Naive thymus-derived CD8-positive, alpha-beta T cell (primary cell): ENCODE measurements at regions of chr19 and their contacts with region 1.

Region 1: GRCh38 chr19:57708641-57709361 is at the start of gene ZNF154:
- DNase-seq: peak; percentile 38 to 89 (median 54)
- ATAC-seq: peak; percentile 91 to 95
- H3K4me3 Mint-ChIP-seq: peak within 1 kb of the TSS; percentile 77 to 96 (median 92)
- H3K27ac Mint-ChIP-seq: peak within 1 kb of the TSS; percentile 88 to 100 (median 95)
- H3K4me1 Mint-ChIP-seq: peaks cover 6 to 40% (median 15%) of the 10 kb centered on the region in 4 donors
- H3K27me3 Mint-ChIP-seq: peaks cover 0 to 16% (median 3%) of the 10 kb centered on the region in 5 donors
- polyA plus RNA-seq, gene ZNF154: 1.1 to 2.4 (median 1.2) TPM

Region 2: DNA sequence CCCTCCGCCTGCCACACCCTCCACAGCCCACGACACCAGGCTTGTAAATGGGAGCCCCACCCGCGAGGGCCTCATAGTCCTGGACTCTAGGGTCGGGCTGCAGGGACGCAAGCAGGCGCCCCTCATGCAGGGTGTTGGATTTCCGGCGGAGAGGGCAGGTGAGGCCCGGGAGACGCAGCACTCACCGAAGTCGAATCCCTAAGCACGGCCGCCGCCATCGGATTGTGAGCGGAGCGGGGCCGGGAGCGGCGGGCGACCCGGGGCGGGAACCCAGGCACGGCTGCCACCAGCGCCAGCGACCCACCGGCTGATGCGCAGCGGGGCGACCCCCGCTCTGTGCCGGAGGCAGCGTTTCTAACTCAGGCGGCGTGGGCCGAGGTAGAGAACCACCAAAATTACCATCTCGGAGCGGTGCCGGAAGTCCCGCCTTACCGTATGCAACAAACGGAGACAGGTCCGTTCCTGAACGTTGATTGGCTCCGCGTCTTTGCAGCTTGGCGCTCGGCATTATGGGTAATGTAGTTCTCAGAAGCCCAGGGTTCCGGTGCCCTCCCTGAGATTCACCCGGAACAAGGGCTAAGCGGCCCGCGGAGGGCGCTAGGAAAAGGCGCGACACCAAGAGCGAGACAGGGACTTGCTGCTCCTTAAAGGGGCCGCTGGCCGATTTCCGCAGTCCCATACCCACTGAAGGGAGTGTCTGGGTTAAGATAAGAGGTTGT is 130.2 kb before region 1 on chr19 and contains the start of gene ZNF416:
- POLR2A ChIA-PET with region 1: interaction called, 11 read pairs
- DNase-seq: peak; percentile 83 to 99 (median 96)
- ATAC-seq: peak; percentile 84 to 97
- H3K4me3 Mint-ChIP-seq: peak within 1 kb of the TSS; percentile 78 to 90 (median 82)
- H3K27ac Mint-ChIP-seq: peak within 1 kb of the TSS; percentile 83 to 96 (median 91)
- H3K4me1 Mint-ChIP-seq: peaks cover 13 to 31% (median 30%) of the 10 kb centered on the region in 4 donors
- H3K27me3 Mint-ChIP-seq: no peaks in the 10 kb centered on the region
- polyA plus RNA-seq, gene ZNF416: 4.1 to 7.6 (median 4.3) TPM

Region 3: GRCh38 chr19:57613941-57614743 is 94.7 kb before region 1 on chr19 and contains the start of gene ZNF134:
- POLR2A ChIA-PET with region 1: interaction called, 15 read pairs
- DNase-seq: peak; percentile 80 to 95 (median 88)
- ATAC-seq: peak; percentile 99 to 100
- H3K4me3 Mint-ChIP-seq: peak within 1 kb of the TSS; percentile 86 to 94 (median 92)
- H3K27ac Mint-ChIP-seq: peak within 1 kb of the TSS; percentile 67 to 94 (median 89)
- H3K4me1 Mint-ChIP-seq: peaks cover 28 to 41% (median 38%) of the 10 kb centered on the region in 4 donors
- H3K27me3 Mint-ChIP-seq: no peaks in the 10 kb centered on the region
- polyA plus RNA-seq, gene ZNF134: 9.6 to 15.1 (median 13.7) TPM

Region 4: GRCh38 chr19:57632987-57633831 is 75.6 kb before region 1 on chr19 and contains the start of gene ZNF211:
- POLR2A ChIA-PET with region 1: interaction called, 12 read pairs
- DNase-seq: peak; percentile 75 to 94 (median 85)
- ATAC-seq: peak; percentile 97 to 99
- H3K4me3 Mint-ChIP-seq: peak within 1 kb of the TSS; percentile 84 to 97 (median 94)
- H3K27ac Mint-ChIP-seq: peak within 1 kb of the TSS; percentile 78 to 96 (median 94)
- H3K4me1 Mint-ChIP-seq: peaks cover 14 to 29% (median 25%) of the 10 kb centered on the region in 4 donors
- H3K27me3 Mint-ChIP-seq: no peaks in the 10 kb centered on the region
- polyA plus RNA-seq, gene ZNF211: 13.5 to 18.5 (median 15.5) TPM

Region 5: DNA sequence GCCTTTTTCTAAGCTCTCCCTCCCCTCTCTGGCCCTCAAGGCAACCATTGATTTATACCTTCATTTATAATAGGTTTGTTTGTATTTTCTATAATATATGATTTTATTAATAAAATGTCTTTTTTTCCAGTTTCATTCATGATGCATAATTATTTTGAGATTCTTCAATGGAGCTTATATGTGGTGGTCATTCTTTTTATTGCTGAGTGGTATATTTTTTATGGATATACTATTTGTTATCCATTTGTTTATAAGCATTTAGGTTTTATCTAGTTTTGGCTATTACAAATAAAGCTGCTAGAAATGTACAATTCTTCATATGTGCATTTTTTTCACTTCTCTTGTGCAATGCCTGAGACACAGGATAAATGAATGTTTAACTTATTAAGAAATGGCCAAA is 65.1 kb before region 1 on chr19:
- POLR2A ChIA-PET with region 1: no interaction called
- DNase-seq: no peak
- ATAC-seq: no peak
- H3K4me3 Mint-ChIP-seq: no peak overlapping the region
- H3K27ac Mint-ChIP-seq: no peak overlapping the region
- H3K4me1 Mint-ChIP-seq: no peaks in the 10 kb centered on the region
- H3K27me3 Mint-ChIP-seq: no peaks in the 10 kb centered on the region

Region 6: DNA sequence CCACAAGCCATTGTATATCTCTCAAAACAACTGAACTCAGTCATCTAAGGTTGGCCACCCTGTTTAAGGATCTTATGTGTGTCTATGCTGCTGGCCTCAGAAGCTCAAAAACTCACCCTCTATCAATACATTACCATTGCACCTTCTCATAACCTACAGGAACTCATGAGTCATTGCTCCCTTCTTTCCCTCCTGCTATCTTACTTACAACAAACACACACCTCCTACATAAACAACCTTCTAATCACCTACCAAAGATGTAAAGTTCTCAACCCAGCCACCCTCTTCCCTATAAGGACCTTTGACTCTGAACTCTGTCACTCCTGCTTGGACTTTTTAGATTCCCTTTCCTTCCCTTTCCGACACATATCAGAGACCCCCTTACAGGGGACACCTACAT is 53.4 kb before region 1 on chr19:
- POLR2A ChIA-PET with region 1: no interaction called
- DNase-seq: no peak
- ATAC-seq: no peak
- H3K4me3 Mint-ChIP-seq: no peak overlapping the region
- H3K27ac Mint-ChIP-seq: no peak overlapping the region
- H3K4me1 Mint-ChIP-seq: peaks cover 0 to 8% (median 5%) of the 10 kb centered on the region in 4 donors
- H3K27me3 Mint-ChIP-seq: peaks cover 31 to 69% (median 45%) of the 10 kb centered on the region in 5 donors

Region 7: DNA sequence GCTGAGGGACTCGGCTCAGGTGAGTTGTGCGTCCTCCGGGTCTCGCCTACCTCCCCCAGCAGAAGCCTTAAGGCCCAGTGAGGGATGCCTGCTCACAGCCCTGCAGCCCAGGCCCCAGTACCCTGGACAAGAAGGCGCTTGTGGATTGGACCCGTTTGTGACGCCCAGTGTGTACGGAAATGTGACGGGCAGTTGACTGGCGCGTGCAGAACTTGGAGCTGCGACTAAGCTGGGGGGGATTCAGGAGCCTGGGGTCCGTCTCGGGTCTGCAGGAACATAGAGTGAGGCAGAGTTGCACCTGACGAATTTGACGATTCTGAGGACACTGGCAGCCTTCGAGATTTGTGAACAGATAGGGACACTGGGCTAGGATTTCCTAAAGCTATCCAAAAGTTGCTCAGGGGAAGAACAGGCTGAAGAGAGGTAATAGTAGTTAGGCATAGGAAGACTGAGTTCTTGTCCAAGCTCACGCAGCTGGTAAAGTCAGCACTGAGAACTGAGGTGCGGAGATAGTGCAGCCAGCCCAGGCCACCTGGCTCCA is 26.5 kb before region 1 on chr19:
- POLR2A ChIA-PET with region 1: interaction called, 29 read pairs
- DNase-seq: no peak
- ATAC-seq: no peak
- H3K4me3 Mint-ChIP-seq: peak overlapping the region; percentile 96 to 99 (median 98)
- H3K27ac Mint-ChIP-seq: peak overlapping the region; percentile 94 to 99 (median 98)
- H3K4me1 Mint-ChIP-seq: peaks cover 26 to 41% (median 38%) of the 10 kb centered on the region in 4 donors
- H3K27me3 Mint-ChIP-seq: peaks cover 3 to 14% (median 5%) of the 10 kb centered on the region in 5 donors

Region 8: DNA sequence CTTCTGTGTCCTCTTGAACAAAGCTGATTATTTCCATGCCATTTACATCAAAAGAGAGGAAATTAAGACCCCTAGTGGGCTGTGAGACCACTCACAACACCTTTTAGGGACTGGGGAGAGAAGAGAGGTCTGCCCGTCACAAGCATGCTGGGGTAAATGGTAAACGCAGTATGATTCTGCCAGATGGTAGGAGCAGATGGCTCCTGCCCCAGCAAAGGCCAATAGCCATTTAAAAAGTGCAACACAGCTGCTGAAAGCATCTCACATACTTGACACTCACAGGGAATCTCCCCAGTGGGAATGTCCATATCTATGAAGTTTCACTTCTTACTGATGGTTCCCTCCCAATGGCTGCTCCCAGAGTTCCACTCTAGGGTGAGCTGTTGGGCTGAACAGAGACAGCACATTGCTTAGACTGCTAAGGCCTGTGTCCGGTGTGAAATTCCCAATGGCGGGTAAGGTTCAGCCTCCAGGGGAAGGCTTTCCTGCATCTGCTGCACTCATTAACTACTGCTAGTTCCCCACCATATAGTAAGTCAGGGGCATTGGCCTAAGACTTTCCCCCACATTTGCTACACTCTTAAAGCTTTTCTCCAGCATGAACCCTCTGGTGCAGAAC is 11.2 kb after region 1 on chr19:
- POLR2A ChIA-PET with region 1: interaction called, 55 read pairs
- DNase-seq: no peak
- ATAC-seq: no peak
- H3K4me3 Mint-ChIP-seq: no peak overlapping the region
- H3K27ac Mint-ChIP-seq: no peak overlapping the region
- H3K4me1 Mint-ChIP-seq: peaks cover 4 to 15% (median 9%) of the 10 kb centered on the region in 4 donors
- H3K27me3 Mint-ChIP-seq: no peaks in the 10 kb centered on the region

Region 9: GRCh38 chr19:57746580-57747471 is 38.0 kb after region 1 on chr19 and contains the start of gene ZNF776:
- POLR2A ChIA-PET with region 1: interaction called, 22 read pairs
- DNase-seq: peak; percentile 50 to 92 (median 82)
- ATAC-seq: peak; percentile 95 to 98
- H3K4me3 Mint-ChIP-seq: peak within 1 kb of the TSS; percentile 87 to 100 (median 94)
- H3K27ac Mint-ChIP-seq: peak within 1 kb of the TSS; percentile 92 to 100 (median 98)
- H3K4me1 Mint-ChIP-seq: peaks cover 9 to 39% (median 32%) of the 10 kb centered on the region in 4 donors
- H3K27me3 Mint-ChIP-seq: no peaks in the 10 kb centered on the region
- polyA plus RNA-seq, gene ZNF776: 8.2 to 11.9 (median 8.4) TPM